OCI-LY7 (cell line): ENCODE measurements at regions of chr17 and their contacts with region 1.

Region 1: DNA sequence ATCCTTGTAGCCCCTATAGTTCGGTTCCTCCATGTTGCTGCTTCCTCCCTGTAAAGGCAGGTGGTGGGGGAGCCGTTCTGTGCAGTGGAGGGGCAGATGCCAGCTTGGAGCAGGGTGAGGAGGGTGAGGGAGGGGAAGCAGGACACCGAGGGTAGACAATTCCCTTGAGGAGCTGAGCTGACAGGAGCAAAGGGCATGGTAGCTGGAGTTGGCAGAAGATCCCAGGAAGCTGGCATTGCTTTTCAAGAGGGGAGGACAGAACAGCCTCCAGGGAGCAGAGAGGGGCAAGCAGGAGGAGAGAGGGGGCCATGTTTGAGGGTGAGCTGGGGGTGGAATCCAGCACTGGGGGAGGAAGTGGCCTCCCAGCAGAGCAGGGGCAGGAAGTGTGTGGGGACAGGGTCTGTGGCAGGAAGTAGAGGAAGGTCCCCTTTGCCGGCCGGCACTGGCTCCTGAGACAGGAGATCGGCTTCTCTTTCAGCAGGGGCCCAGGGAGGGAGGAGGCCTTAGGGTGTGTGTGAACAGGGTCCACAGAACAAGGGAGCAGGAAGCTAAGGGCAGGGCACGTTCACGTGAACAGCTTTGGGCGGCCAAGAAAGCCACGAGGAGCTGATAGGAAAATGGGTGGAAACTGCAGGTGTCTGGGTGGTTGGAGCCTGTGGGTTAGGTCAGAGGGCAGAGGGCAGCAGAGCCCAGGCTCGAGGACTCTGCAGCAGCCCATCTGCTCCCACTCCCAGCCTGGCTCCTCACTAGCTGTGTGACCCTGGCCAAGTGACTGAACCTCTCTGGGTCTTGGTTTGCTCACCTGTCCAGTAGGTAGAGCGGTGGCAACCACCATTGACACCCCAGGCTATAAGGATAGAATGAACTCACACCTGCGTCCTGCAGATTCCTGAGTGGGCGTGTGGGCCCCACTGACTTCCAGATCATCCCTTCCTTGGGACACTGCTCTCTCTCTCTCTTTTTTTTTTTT is 17.5 kb upstream of the SPNS2 start:
- DNase-seq: peak; percentile 73
- H3K4me3 ChIP-seq: peak overlapping the region; percentile 11
- H3K27ac ChIP-seq: peak overlapping the region; percentile 15
- H3K4me1 ChIP-seq: peaks cover 15% of the 10 kb centered on the region
- CTCF ChIP-seq: no peak

Region 2: GRCh38 chr17:4463818-4464476 is 17.3 kb before region 1 on chr17:
- CTCF ChIA-PET with region 1: no interaction called
- POLR2A ChIA-PET with region 1: interaction called, 10 read pairs
- intact Hi-C with region 1: no loop called
- DNase-seq: no peak
- H3K4me3 ChIP-seq: no peak overlapping the region
- H3K27ac ChIP-seq: no peak overlapping the region
- H3K4me1 ChIP-seq: no peaks in the 10 kb centered on the region
- CTCF ChIP-seq: no peak

Region 3: GRCh38 chr17:4512191-4513111 is 31.2 kb after region 1 on chr17:
- CTCF ChIA-PET with region 1: interaction called, 11 read pairs
- POLR2A ChIA-PET with region 1: no interaction called
- intact Hi-C with region 1: no loop called
- DNase-seq: no peak
- H3K4me3 ChIP-seq: no peak overlapping the region
- H3K27ac ChIP-seq: no peak overlapping the region
- H3K4me1 ChIP-seq: peaks cover 13% of the 10 kb centered on the region
- CTCF ChIP-seq: no peak

Region 4: DNA sequence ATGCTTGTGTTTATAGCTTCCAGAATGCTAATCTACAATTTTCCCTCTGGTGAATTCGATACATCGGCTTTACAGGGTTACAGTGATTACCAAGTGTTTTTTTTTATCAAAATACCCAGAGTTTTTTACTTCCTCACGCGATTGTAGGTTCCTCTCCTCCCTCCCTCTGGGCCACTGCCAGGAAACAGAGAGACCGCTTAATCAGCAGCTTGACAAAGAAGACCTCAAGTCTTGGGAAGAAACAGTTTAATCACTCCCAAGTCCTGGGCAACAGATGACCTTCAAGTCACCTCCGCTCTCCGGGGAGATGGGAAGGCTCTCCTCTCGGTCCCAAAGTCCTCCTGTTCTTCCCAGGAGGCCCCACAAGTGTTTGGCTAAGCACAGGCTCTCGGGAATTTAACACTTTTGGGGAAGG is 126.6 kb after region 1 on chr17:
- CTCF ChIA-PET with region 1: no interaction called
- POLR2A ChIA-PET with region 1: no interaction called
- intact Hi-C with region 1: no loop called
- DNase-seq: no peak
- H3K4me3 ChIP-seq: no peak overlapping the region
- H3K27ac ChIP-seq: no peak overlapping the region
- H3K4me1 ChIP-seq: no peaks in the 10 kb centered on the region
- CTCF ChIP-seq: no peak